ENCODE measurements at regions of chr12 and their contacts with region 1.

Region 1: GRCh38 chr12:57165734-57166133 is 18.3 kb upstream of the LRP1-AS start:
- DNase-seq: no peak
- H3K4me3 ChIP-seq: no peak overlapping the region
- H3K27ac ChIP-seq: no peak overlapping the region
- H3K4me1 ChIP-seq: peaks cover 17% of the 10 kb centered on the region
- CTCF ChIP-seq: no peak

Region 2: GRCh38 chr12:57133910-57134309 is 31.8 kb before region 1 on chr12:
- CTCF ChIA-PET with region 1: interaction called, 13 read pairs
- POLR2A ChIA-PET with region 1: no interaction called
- intact Hi-C with region 1: no loop called
- DNase-seq: no peak
- H3K4me3 ChIP-seq: no peak overlapping the region
- H3K27ac ChIP-seq: no peak overlapping the region
- H3K4me1 ChIP-seq: peaks cover under 1% of the 10 kb centered on the region
- CTCF ChIP-seq: no peak